Dendritic cell treated with granulocyte-macrophage colony-stimulating factor and Interleukin-4, amounts not matched to agents 40 ng/mL and 50 ng/mL, for 4 days (primary cell): ENCODE measurements at regions of chr3 and their contacts with region 1.

Region 1: GRCh38 chr3:45499529-45499928 is 95.0 kb upstream of the LIMD1 start:
- H3K4me3 Mint-ChIP-seq: no peak overlapping the region
- H3K27ac Mint-ChIP-seq: no peak overlapping the region
- H3K4me1 Mint-ChIP-seq: no peaks in the 10 kb centered on the region
- H3K27me3 Mint-ChIP-seq: no peaks in the 10 kb centered on the region

Region 2: GRCh38 chr3:45224824-45225464 is 274.6 kb before region 1 on chr3:
- intact Hi-C with region 1: loop called (anchors 1 kb)
- H3K4me3 Mint-ChIP-seq: peak overlapping the region; percentile 82
- H3K27ac Mint-ChIP-seq: peak overlapping the region; percentile 34
- H3K4me1 Mint-ChIP-seq: peaks cover 16% of the 10 kb centered on the region
- H3K27me3 Mint-ChIP-seq: peaks cover 72% of the 10 kb centered on the region